MCF 10A (cell line): ENCODE measurements at regions of chr5 and their contacts with region 1.

Region 1: GRCh38 chr5:149951135-149951749 is 6.6 kb upstream of the PDE6A start:
- DNase-seq: no peak
- H3K4me3 Mint-ChIP-seq: no peak overlapping the region
- H3K27ac Mint-ChIP-seq: peak overlapping the region; percentile 21
- H3K4me1 Mint-ChIP-seq: peaks cover 30% of the 10 kb centered on the region
- H3K27me3 Mint-ChIP-seq: no peaks in the 10 kb centered on the region
- CTCF ChIP-seq: no peak

Region 2: DNA sequence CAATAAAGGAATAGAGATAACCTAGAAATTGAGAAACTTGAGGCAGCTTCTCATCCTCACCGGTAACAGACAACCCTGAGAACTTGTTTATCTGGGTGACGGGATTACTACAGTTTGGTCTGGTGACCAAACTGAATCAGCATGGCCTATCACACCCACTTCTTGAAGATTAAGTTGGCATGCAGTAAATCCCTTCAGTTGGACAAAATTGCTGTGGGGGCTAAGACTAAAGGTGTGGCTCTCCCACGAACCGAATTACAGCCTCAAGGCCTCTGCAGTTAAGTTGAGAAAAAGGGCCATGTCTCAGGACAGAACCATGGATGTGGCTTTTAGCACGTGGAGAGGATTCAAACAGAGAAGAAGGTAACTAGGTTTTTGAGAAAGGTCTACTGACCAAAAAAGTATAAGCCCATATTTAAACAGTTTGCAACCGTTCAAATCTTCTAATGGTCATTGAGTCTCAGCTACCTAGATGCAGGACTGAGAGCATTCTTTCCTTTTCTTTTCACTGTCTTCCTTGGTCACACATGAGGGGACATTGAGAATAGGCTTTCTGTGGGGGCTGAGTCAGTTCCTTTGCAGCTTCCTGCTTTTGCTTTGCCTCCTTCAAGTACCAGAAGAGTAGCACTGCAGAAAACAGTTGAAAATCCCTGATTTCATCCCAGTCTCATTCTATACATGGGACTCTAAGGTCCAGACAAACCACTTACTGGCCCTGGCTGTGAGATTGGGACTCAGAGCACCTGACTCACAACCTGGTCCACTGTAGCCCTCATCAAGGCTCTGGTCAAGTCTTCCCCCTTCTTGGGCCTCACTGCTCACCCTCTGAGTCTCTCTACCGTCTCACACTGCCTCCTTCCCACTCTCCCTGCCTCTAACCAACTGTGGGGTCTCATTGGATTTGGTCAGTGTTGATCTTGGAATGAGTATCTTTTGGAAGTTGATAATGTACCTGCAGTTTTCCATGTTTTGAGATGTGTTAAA is 37.5 kb before region 1 on chr5:
- CTCF ChIA-PET with region 1: interaction called, 4 read pairs
- POLR2A ChIA-PET with region 1: interaction called, 12 read pairs
- intact Hi-C with region 1: no loop called
- DNase-seq: no peak
- H3K4me3 Mint-ChIP-seq: no peak overlapping the region
- H3K27ac Mint-ChIP-seq: no peak overlapping the region
- H3K4me1 Mint-ChIP-seq: peaks cover 57% of the 10 kb centered on the region
- H3K27me3 Mint-ChIP-seq: no peaks in the 10 kb centered on the region
- CTCF ChIP-seq: no peak

Region 3: DNA sequence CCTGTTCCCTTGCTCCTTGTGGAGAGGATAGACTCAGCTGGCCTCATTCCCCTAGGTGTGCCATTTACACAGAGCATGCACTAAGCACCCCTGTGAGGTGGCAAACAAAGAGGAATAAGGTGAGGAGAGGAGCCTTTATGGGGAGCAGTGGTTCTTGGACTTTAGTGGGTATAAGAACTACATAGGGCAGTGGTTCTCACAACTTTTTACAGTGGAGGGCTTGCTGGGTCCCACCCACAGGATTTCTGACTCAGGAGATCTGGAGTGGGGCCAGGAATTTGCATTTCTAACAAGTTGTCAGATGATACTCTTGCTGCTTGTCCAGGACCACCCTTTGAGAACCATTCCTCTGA is 93.1 kb after region 1 on chr5:
- CTCF ChIA-PET with region 1: no interaction called
- POLR2A ChIA-PET with region 1: no interaction called
- intact Hi-C with region 1: no loop called
- DNase-seq: peak; percentile 59
- H3K4me3 Mint-ChIP-seq: no peak overlapping the region
- H3K27ac Mint-ChIP-seq: peak overlapping the region; percentile 59
- H3K4me1 Mint-ChIP-seq: peaks cover 19% of the 10 kb centered on the region
- H3K27me3 Mint-ChIP-seq: no peaks in the 10 kb centered on the region
- CTCF ChIP-seq: no peak